ENCODE measurements at regions of chr19 and their contacts with region 1.

Region 1: DNA sequence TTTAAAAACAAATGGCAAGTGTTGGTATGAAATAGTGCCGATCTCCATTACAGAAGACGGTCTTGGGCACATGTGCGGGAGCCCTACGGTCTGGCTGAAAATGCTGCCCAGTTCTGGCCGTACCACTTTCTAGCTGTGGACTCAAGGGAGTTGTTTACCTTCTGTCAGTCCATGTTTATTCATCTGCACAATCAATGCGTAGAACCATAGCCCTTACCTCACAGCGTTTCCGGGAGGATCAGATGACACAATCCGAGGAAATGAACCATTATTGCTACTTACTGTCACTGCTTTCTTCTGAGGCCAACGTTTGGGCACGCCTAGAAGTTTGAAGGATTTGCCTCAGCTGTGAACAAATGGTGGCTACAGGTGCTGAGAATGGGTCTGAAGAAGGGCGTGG is 31.2 kb downstream of the GADD45B start:
- DNase-seq: peak; percentile 48 to 77 (median 62)
- H3K4me3 ChIP-seq: no peak overlapping the region
- H3K4me3 Mint-ChIP-seq: peak overlapping the region in 6 of 8 donors; percentile 39 to 72 (median 60)
- H3K27ac ChIP-seq: no peak overlapping the region
- H3K27ac Mint-ChIP-seq: peak overlapping the region; percentile 73 to 93 (median 83)
- H3K4me1 ChIP-seq: peaks cover 25% of the 10 kb centered on the region
- H3K4me1 Mint-ChIP-seq: peaks cover 15 to 41% (median 24%) of the 10 kb centered on the region in 4 donors
- H3K27me3 ChIP-seq: no peaks in the 10 kb centered on the region
- H3K27me3 Mint-ChIP-seq: no peaks in the 10 kb centered on the region

Region 2: DNA sequence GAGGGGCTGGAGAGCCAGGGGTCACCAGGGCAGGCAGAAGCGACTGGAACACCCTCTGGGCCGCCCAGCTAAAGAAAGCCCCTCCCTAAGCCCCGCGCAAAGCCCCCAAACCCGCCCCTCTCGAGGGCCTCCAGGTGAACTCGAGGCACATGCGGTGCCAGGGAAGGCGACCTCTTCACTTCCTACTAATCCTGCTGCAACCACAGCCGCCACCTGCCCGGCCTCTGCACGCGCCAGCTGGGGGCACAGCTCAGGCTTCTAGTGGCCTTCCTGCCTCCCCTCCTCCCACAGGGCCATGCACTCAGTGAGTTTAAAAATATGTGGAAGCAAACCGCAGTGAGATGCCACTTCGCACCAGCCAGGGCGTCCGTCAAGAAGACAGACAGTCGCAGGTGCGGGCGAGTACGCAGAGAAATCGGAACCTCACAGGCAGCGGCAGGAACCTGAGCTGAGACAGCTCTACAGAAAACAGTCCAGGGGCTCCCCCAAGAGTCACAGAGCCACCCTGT is 60.8 kb before region 1 on chr19:
- CTCF ChIA-PET with region 1: no interaction called
- POLR2A ChIA-PET with region 1: no interaction called
- intact Hi-C with region 1: no loop called
- DNase-seq: no peak
- H3K4me3 ChIP-seq: no peak overlapping the region
- H3K4me3 Mint-ChIP-seq: peak overlapping the region in 5 of 8 donors; percentile 28 to 62 (median 39)
- H3K27ac ChIP-seq: no peak overlapping the region
- H3K27ac Mint-ChIP-seq: peak overlapping the region in 3 of 7 donors; percentile 25 to 76 (median 66)
- H3K4me1 ChIP-seq: peaks cover 5% of the 10 kb centered on the region
- H3K4me1 Mint-ChIP-seq: peaks cover 6 to 16% (median 9%) of the 10 kb centered on the region in 4 donors
- H3K27me3 ChIP-seq: no peaks in the 10 kb centered on the region
- H3K27me3 Mint-ChIP-seq: no peaks in the 10 kb centered on the region

Region 3: GRCh38 chr19:2494444-2495129 is 12.5 kb before region 1 on chr19:
- CTCF ChIA-PET with region 1: interaction called, 4 read pairs
- POLR2A ChIA-PET with region 1: interaction called, 15 read pairs
- intact Hi-C with region 1: no loop called
- DNase-seq: peak; percentile 31 to 80 (median 33)
- H3K4me3 ChIP-seq: peak overlapping the region; percentile 34 to 77
- H3K4me3 Mint-ChIP-seq: peak overlapping the region; percentile 70 to 85 (median 80)
- H3K27ac ChIP-seq: peak overlapping the region; percentile 56
- H3K27ac Mint-ChIP-seq: peak overlapping the region in 6 of 7 donors; percentile 43 to 74 (median 64)
- H3K4me1 ChIP-seq: peaks cover 23% of the 10 kb centered on the region
- H3K4me1 Mint-ChIP-seq: peaks cover 4 to 35% (median 16%) of the 10 kb centered on the region in 4 donors
- H3K27me3 ChIP-seq: peaks cover 11% of the 10 kb centered on the region
- H3K27me3 Mint-ChIP-seq: peaks cover 11 to 14% of the 10 kb centered on the region in 2 donors

Region 4: GRCh38 chr19:2543463-2544442 is 36.6 kb after region 1 on chr19:
- CTCF ChIA-PET with region 1: no interaction called
- POLR2A ChIA-PET with region 1: interaction called, 11 read pairs
- intact Hi-C with region 1: loop called (anchors 2 kb)
- DNase-seq: peak; percentile 11 to 75 (median 28)
- H3K4me3 ChIP-seq: peak overlapping the region in 1 of 2 donors; percentile 34
- H3K4me3 Mint-ChIP-seq: peak overlapping the region; percentile 55 to 85 (median 70)
- H3K27ac ChIP-seq: no peak overlapping the region
- H3K27ac Mint-ChIP-seq: peak overlapping the region in 2 of 7 donors; percentile 17 to 65
- H3K4me1 ChIP-seq: peaks cover 22% of the 10 kb centered on the region
- H3K4me1 Mint-ChIP-seq: peaks cover 2 to 17% (median 13%) of the 10 kb centered on the region in 4 donors
- H3K27me3 ChIP-seq: no peaks in the 10 kb centered on the region
- H3K27me3 Mint-ChIP-seq: no peaks in the 10 kb centered on the region

Region 5: DNA sequence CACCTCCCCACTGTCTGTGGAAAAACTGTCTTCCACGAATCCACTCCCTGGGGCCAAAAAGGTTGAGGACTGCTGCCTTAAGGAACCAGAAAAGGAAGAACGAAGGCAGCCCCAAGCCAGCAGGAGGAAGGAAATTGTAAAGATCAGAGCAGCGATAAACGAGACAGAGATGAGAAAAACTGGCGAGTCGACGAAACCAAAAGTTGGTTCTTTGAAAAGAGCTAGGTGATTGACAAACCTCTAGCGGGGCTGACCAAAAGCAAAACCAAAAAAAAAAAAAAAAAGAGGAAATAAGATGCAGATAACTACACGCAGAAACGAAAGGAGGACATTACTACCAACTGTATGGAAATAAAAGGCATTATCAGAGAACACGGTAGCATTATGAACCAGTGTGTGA is 45.8 kb after region 1 on chr19:
- CTCF ChIA-PET with region 1: no interaction called
- POLR2A ChIA-PET with region 1: interaction called, 23 read pairs
- intact Hi-C with region 1: loop called (anchors 2 kb)
- DNase-seq: peak; percentile 74 to 84 (median 80)
- H3K4me3 ChIP-seq: peak overlapping the region; percentile 36 to 46
- H3K4me3 Mint-ChIP-seq: peak overlapping the region; percentile 52 to 93 (median 82)
- H3K27ac ChIP-seq: peak overlapping the region; percentile 12
- H3K27ac Mint-ChIP-seq: peak overlapping the region; percentile 67 to 96 (median 78)
- H3K4me1 ChIP-seq: peaks cover 24% of the 10 kb centered on the region
- H3K4me1 Mint-ChIP-seq: peaks cover 9 to 18% (median 14%) of the 10 kb centered on the region in 4 donors
- H3K27me3 ChIP-seq: no peaks in the 10 kb centered on the region
- H3K27me3 Mint-ChIP-seq: no peaks in the 10 kb centered on the region

Region 6: GRCh38 chr19:2602391-2603181 is 95.5 kb after region 1 on chr19:
- CTCF ChIA-PET with region 1: interaction called, 7 read pairs
- POLR2A ChIA-PET with region 1: interaction called, 10 read pairs
- intact Hi-C with region 1: no loop called
- DNase-seq: no peak
- H3K4me3 ChIP-seq: no peak overlapping the region
- H3K4me3 Mint-ChIP-seq: no peak overlapping the region
- H3K27ac ChIP-seq: no peak overlapping the region
- H3K27ac Mint-ChIP-seq: peak overlapping the region in 2 of 7 donors; percentile 24 to 68
- H3K4me1 ChIP-seq: peaks cover 13% of the 10 kb centered on the region
- H3K4me1 Mint-ChIP-seq: peaks cover 7 to 18% (median 12%) of the 10 kb centered on the region in 4 donors
- H3K27me3 ChIP-seq: no peaks in the 10 kb centered on the region
- H3K27me3 Mint-ChIP-seq: no peaks in the 10 kb centered on the region